Activated CD8-positive, alpha-beta T cell treated with anti-CD3 and anti-CD28 coated beads for 36 hours (primary cell): ENCODE measurements at regions of chr1 and their contacts with region 1.

Region 1: DNA sequence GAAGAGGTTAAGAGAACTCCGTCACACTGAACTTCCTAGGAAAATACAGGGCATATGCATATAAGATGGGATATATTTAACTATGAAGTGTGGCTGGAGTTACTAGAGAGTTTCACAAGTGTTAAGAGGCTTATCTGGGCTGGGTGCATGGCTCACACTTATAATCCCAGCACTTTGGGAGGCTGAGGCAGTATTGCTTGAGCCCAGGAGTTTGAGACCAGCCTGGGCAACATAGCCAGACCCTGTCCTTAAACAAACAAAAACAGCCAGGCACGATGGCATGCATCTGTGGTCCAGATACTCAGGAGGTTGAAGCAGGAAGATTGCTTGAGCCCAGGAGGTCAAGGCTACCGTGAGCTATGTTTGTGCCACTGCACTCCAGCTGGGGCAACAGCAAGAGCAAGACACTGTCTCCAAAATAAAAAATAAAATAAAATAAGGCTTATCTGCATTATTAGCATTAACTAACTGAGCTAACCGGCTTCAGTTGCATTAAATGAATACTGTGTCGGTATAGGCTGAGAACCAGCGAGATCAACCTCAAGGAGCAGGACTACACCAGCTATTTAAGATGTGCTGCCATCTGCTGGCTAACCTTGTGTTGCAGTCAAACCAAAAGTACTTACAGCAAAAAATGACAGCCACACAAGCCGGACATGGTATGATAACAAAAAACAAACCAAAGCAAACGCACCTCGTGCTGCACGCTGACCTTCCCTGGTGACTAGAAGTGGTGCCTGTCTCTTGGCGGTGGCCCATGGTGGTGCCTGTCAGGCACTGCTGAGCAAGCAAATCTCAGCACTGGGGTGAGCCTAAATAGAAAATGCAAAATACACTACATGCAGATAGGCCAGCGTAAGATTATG is 19.7 kb upstream of the RBBP5 start:
- DNase-seq: peak; percentile 92
- ATAC-seq: peak; percentile 94
- H3K4me3 Mint-ChIP-seq: no peak overlapping the region
- H3K27ac Mint-ChIP-seq: no peak overlapping the region
- H3K4me1 Mint-ChIP-seq: peaks cover 5% of the 10 kb centered on the region
- H3K27me3 Mint-ChIP-seq: no peaks in the 10 kb centered on the region
- CTCF ChIP-seq: peak; percentile 79

Region 2: GRCh38 chr1:204959374-204959773 is 182.1 kb before region 1 on chr1:
- CTCF ChIA-PET with region 1: no interaction called
- POLR2A ChIA-PET with region 1: no interaction called
- intact Hi-C with region 1: no loop called
- DNase-seq: no peak
- ATAC-seq: no peak
- H3K4me3 Mint-ChIP-seq: no peak overlapping the region
- H3K27ac Mint-ChIP-seq: no peak overlapping the region
- H3K4me1 Mint-ChIP-seq: no peaks in the 10 kb centered on the region
- H3K27me3 Mint-ChIP-seq: peaks cover 4% of the 10 kb centered on the region
- CTCF ChIP-seq: no peak

Region 3: GRCh38 chr1:204989266-204990058 is 152.0 kb before region 1 on chr1:
- CTCF ChIA-PET with region 1: interaction called, 17 read pairs
- POLR2A ChIA-PET with region 1: no interaction called
- intact Hi-C with region 1: no loop called
- DNase-seq: peak; percentile 74
- ATAC-seq: peak; percentile 98
- H3K4me3 Mint-ChIP-seq: no peak overlapping the region
- H3K27ac Mint-ChIP-seq: no peak overlapping the region
- H3K4me1 Mint-ChIP-seq: peaks cover 12% of the 10 kb centered on the region
- H3K27me3 Mint-ChIP-seq: no peaks in the 10 kb centered on the region
- CTCF ChIP-seq: peak; percentile 89

Region 4: DNA sequence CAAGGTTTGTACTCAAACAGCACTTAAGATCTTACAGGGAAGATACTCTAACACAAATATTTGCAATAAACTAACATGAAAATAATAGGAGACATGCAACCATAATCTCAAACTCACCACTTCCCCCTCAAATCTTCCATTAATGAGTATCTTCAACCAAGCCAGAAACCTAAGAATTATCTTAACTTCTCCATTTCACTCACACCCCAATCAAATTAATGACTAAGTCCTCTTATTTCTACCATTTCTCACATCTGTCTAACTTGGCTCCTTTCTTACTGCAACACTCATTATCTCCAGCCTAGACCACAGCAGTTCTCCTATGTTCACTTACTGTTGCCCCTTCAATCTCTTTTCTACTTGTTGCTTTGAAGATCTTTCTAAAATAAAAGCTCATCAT is 30.1 kb before region 1 on chr1:
- CTCF ChIA-PET with region 1: interaction called, 16 read pairs
- POLR2A ChIA-PET with region 1: no interaction called
- intact Hi-C with region 1: no loop called
- DNase-seq: no peak
- ATAC-seq: no peak
- H3K4me3 Mint-ChIP-seq: no peak overlapping the region
- H3K27ac Mint-ChIP-seq: no peak overlapping the region
- H3K4me1 Mint-ChIP-seq: peaks cover 14% of the 10 kb centered on the region
- H3K27me3 Mint-ChIP-seq: no peaks in the 10 kb centered on the region
- CTCF ChIP-seq: no peak

Region 5: GRCh38 chr1:205121660-205122488 is 19.6 kb before region 1 on chr1 and contains the start of gene RBBP5:
- CTCF ChIA-PET with region 1: interaction called, 46 read pairs
- POLR2A ChIA-PET with region 1: interaction called, 6 read pairs
- intact Hi-C with region 1: no loop called
- DNase-seq: peak; percentile 96
- ATAC-seq: peak; percentile 96
- H3K4me3 Mint-ChIP-seq: peak within 1 kb of the TSS; percentile 95
- H3K27ac Mint-ChIP-seq: peak within 1 kb of the TSS; percentile 97
- H3K4me1 Mint-ChIP-seq: peaks cover 27% of the 10 kb centered on the region
- H3K27me3 Mint-ChIP-seq: no peaks in the 10 kb centered on the region
- CTCF ChIP-seq: peak; percentile 43
- total RNA-seq, gene RBBP5: 18.8 to 21.6 TPM

Region 6: DNA sequence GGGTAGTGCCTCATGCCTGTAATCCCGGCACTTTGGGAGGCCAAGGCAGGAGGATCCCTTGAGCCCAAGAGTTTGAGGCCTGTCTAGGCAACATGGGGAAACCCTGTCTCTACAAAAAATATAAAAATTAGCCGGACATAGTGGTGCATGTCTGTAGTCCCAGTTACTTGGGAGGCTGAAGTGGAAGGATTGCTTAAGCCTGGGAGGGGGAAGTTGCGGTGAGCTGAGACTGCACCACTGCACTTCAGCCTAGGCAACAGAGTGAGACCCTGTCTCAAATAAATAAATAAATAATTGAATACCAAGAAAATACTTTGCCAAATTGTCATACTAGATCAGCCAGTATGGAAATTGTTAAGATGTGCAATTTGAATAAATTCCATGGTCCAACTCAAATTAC is 13.8 kb before region 1 on chr1:
- CTCF ChIA-PET with region 1: interaction called, 46 read pairs
- POLR2A ChIA-PET with region 1: interaction called, 6 read pairs
- intact Hi-C with region 1: no loop called
- DNase-seq: no peak
- ATAC-seq: no peak
- H3K4me3 Mint-ChIP-seq: no peak overlapping the region
- H3K27ac Mint-ChIP-seq: no peak overlapping the region
- H3K4me1 Mint-ChIP-seq: peaks cover 3% of the 10 kb centered on the region
- H3K27me3 Mint-ChIP-seq: no peaks in the 10 kb centered on the region
- CTCF ChIP-seq: no peak

Region 7: GRCh38 chr1:205162301-205162700 is 20.8 kb after region 1 on chr1:
- CTCF ChIA-PET with region 1: interaction called, 27 read pairs
- POLR2A ChIA-PET with region 1: no interaction called
- intact Hi-C with region 1: no loop called
- DNase-seq: no peak
- ATAC-seq: no peak
- H3K4me3 Mint-ChIP-seq: no peak overlapping the region
- H3K27ac Mint-ChIP-seq: no peak overlapping the region
- H3K4me1 Mint-ChIP-seq: peaks cover 4% of the 10 kb centered on the region
- H3K27me3 Mint-ChIP-seq: no peaks in the 10 kb centered on the region
- CTCF ChIP-seq: no peak

Region 8: GRCh38 chr1:205374228-205375078 is 233.0 kb after region 1 on chr1:
- CTCF ChIA-PET with region 1: no interaction called
- POLR2A ChIA-PET with region 1: no interaction called
- intact Hi-C with region 1: no loop called
- DNase-seq: no peak
- ATAC-seq: no peak
- H3K4me3 Mint-ChIP-seq: no peak overlapping the region
- H3K27ac Mint-ChIP-seq: no peak overlapping the region
- H3K4me1 Mint-ChIP-seq: peaks cover 11% of the 10 kb centered on the region
- H3K27me3 Mint-ChIP-seq: peaks cover 17% of the 10 kb centered on the region
- CTCF ChIP-seq: no peak